ENCODE measurements at regions of chr16 and their contacts with region 1.

Region 1: DNA sequence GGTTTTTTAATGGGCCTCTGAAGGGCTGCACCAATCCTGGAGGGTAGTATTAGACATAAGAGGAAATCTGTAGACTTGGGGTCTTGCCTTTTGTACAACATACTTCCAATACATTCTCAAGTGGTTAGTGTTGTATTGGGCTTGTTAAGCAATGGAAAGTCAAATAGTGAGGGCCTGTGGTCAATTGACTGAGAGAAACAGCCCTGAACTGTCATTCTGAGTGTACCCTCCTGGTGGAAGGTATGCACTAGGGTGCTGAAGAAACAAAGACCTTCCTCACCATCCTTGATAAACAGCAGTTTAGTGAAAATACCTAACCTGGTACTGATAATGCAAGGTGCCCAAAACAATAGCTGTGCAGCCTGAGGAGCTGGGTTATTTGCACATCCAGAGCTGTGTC is 22.2 kb downstream of the OR2C1 start:
- DNase-seq: no peak
- ATAC-seq: no peak
- H3K4me3 ChIP-seq: no peak overlapping the region
- H3K4me3 Mint-ChIP-seq: no peak overlapping the region
- H3K27ac ChIP-seq: no peak overlapping the region
- H3K27ac Mint-ChIP-seq: no peak overlapping the region
- H3K4me1 ChIP-seq: no peaks in the 10 kb centered on the region
- H3K4me1 Mint-ChIP-seq: no peaks in the 10 kb centered on the region
- H3K27me3 ChIP-seq: no peaks in the 10 kb centered on the region
- H3K27me3 Mint-ChIP-seq: no peaks in the 10 kb centered on the region
- CTCF ChIP-seq: no peak

Region 2: DNA sequence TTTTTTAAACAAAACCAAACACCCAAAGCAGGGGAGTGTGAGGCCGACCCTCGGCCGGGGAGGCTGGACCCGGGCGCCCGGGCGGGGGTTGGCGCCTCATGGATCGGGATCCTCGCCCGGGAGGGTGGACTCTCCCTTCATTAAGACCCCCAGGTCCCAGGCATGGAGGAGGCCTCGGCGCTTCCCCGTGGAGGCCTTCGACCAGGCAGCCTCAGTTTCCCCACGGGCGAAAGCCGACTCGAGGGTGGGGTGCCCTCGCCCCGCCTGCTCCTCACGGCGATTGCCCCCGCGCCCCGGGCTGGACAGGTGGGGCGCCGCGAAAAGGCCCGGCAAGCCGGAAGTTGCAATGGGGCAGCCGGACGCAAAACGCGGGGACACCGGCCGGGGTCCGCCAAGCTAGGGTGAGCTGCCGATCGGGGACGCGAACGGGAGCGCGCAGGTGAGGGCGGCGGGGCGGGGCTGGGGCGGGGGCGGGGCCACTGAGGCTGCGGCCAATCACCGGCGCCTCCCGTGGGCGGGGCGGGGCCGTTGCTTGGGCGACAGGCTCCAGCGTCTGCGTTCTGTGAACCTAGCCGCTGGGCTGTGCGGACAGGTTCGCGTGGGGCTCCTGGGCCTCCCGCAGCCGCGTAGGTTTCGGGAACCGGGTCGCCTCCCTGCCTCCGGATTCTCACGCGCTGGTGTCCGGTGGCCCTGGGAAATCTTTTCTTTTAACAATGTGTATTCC is 271.6 kb before region 1 on chr16:
- CTCF ChIA-PET with region 1: no interaction called
- POLR2A ChIA-PET with region 1: no interaction called
- intact Hi-C with region 1: no loop called
- DNase-seq: peak; percentile 79 to 95 (median 90)
- ATAC-seq: peak; percentile 94
- H3K4me3 ChIP-seq: peak overlapping the region; percentile 74 to 77
- H3K4me3 Mint-ChIP-seq: peak overlapping the region; percentile 86
- H3K27ac ChIP-seq: peak overlapping the region; percentile 75 to 93
- H3K27ac Mint-ChIP-seq: peak overlapping the region; percentile 89
- H3K4me1 ChIP-seq: peaks cover 24% of the 10 kb centered on the region
- H3K4me1 Mint-ChIP-seq: peaks cover 26% of the 10 kb centered on the region
- H3K27me3 ChIP-seq: no peaks in the 10 kb centered on the region
- H3K27me3 Mint-ChIP-seq: no peaks in the 10 kb centered on the region
- CTCF ChIP-seq: no peak

Region 3: GRCh38 chr16:3413730-3414379 is 35.9 kb after region 1 on chr16:
- CTCF ChIA-PET with region 1: no interaction called
- POLR2A ChIA-PET with region 1: no interaction called
- intact Hi-C with region 1: loop called in 1 of 2 experiments (anchors 5 kb)
- DNase-seq: no peak
- ATAC-seq: no peak
- H3K4me3 ChIP-seq: no peak overlapping the region
- H3K4me3 Mint-ChIP-seq: no peak overlapping the region
- H3K27ac ChIP-seq: no peak overlapping the region
- H3K27ac Mint-ChIP-seq: no peak overlapping the region
- H3K4me1 ChIP-seq: no peaks in the 10 kb centered on the region
- H3K4me1 Mint-ChIP-seq: no peaks in the 10 kb centered on the region
- H3K27me3 ChIP-seq: no peaks in the 10 kb centered on the region
- H3K27me3 Mint-ChIP-seq: no peaks in the 10 kb centered on the region
- CTCF ChIP-seq: no peak